Activated B cell treated with CpG ODN at 0.5 μM for 24 hours (primary cell): ENCODE measurements at regions of chr18 and their contacts with region 1.

Region 1: GRCh38 chr18:31901063-31901462 is 41.9 kb downstream of the TRAPPC8 start:
- DNase-seq: no peak
- ATAC-seq: no peak
- H3K4me3 Mint-ChIP-seq: no peak overlapping the region
- H3K27ac Mint-ChIP-seq: no peak overlapping the region
- H3K4me1 Mint-ChIP-seq: no peaks in the 10 kb centered on the region
- H3K27me3 Mint-ChIP-seq: no peaks in the 10 kb centered on the region
- CTCF ChIP-seq: no peak

Region 2: GRCh38 chr18:31860488-31860887 is 40.6 kb before region 1 on chr18:
- CTCF ChIA-PET with region 1: interaction called, 3 read pairs
- POLR2A ChIA-PET with region 1: no interaction called
- intact Hi-C with region 1: loop called (anchors 5 kb)
- DNase-seq: no peak
- ATAC-seq: no peak
- H3K4me3 Mint-ChIP-seq: no peak overlapping the region
- H3K27ac Mint-ChIP-seq: no peak overlapping the region
- H3K4me1 Mint-ChIP-seq: no peaks in the 10 kb centered on the region
- H3K27me3 Mint-ChIP-seq: no peaks in the 10 kb centered on the region
- CTCF ChIP-seq: no peak

Region 3: GRCh38 chr18:31990823-31991222 is 89.8 kb after region 1 on chr18:
- CTCF ChIA-PET with region 1: no interaction called
- POLR2A ChIA-PET with region 1: no interaction called
- intact Hi-C with region 1: no loop called
- DNase-seq: no peak
- ATAC-seq: peak; percentile 47
- H3K4me3 Mint-ChIP-seq: no peak overlapping the region
- H3K27ac Mint-ChIP-seq: peak overlapping the region; percentile 30
- H3K4me1 Mint-ChIP-seq: peaks cover 13% of the 10 kb centered on the region
- H3K27me3 Mint-ChIP-seq: no peaks in the 10 kb centered on the region
- CTCF ChIP-seq: no peak